Esophagus muscularis mucosa (tissue), 4 donors: ENCODE measurements at regions of chr19 and their contacts with region 1.

Region 1: GRCh38 chr19:39328046-39328705 is 7.5 kb upstream of the LRFN1 start:
- DNase-seq: peak; percentile 95
- H3K4me3 ChIP-seq: no peak overlapping the region
- H3K27ac ChIP-seq: no peak overlapping the region
- H3K4me1 ChIP-seq: peaks cover 0 to 12% (median 6%) of the 10 kb centered on the region in 4 donors
- H3K27me3 ChIP-seq: peaks cover 0 to 11% (median 0%) of the 10 kb centered on the region in 4 donors
- CTCF ChIP-seq: peak in 2 of 3 experiments; percentile 93 to 96
- EP300 ChIP-seq: no peak
- POLR2A ChIP-seq: no peak

Region 2: DNA sequence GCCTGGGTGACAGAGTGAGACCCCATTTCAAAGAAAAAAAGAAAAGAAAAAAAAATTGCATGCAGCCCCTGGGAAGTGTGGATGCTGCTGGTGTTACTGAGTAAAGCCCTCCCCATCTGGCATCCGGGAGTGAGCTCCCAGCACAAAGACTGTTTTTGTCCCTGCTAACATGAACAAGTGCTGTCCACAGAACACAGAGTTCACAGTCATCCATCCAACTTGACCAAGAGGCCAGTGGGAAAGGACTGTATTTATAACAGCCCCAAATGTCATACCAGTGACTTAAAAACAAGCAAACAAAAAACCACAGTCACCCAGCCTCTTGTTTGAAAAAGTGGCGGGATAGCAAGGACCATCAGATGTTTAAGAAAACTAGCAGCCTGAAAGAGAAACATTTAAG is 363.4 kb before region 1 on chr19:
- intact Hi-C with region 1: loop called (anchors 10 kb)
- DNase-seq: no peak
- H3K4me3 ChIP-seq: no peak overlapping the region
- H3K27ac ChIP-seq: no peak overlapping the region
- H3K4me1 ChIP-seq: peaks cover 0 to 11% (median 10%) of the 10 kb centered on the region in 4 donors
- H3K27me3 ChIP-seq: no peaks in the 10 kb centered on the region
- CTCF ChIP-seq: no peak
- EP300 ChIP-seq: no peak
- POLR2A ChIP-seq: no peak

Region 3: DNA sequence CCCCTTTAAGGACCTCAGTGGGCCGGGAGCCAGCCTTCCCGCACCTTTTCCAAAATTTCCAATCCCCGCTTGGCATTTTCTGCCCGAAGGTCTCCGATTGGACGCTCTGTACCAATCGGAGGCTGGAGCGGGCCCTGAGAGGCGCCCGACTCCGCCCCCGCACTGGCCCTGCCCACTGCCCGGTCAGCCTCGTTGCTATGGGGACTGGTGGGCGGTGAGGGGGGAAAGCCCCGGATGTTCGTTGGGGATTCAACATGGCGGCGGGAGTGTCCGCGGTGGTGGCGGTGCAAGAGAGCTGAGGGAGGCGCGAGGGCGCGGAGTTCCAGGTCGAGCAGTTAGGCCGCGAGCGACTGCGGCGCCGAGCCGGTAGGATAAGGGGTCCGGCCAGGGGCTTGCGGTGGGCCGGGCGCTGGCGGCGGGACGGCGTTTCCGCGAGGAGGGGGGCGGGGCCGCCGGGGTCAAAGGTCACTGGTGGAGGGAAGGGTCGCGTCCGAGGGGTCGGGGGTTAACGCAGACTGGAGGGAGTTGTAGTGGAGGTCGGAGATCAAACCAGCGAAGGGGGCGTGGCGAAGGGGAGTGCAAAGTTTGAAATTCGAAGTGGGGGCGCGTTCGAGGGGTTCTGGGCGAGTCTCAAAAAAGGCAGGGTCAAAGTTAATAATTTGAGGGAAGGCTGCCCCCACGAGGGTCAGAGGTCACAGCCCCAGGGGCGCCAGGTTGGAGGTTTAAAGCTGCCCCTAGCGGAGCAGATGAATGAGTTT is 202.4 kb before region 1 on chr19 and contains the start of gene PAK4:
- intact Hi-C with region 1: loop called (anchors 1 kb)
- DNase-seq: peak; percentile 99
- H3K4me3 ChIP-seq: peak within 1 kb of the TSS; percentile 81 to 97 (median 90)
- H3K27ac ChIP-seq: peak within 1 kb of the TSS; percentile 75 to 86 (median 82)
- H3K4me1 ChIP-seq: peaks cover 51 to 72% (median 65%) of the 10 kb centered on the region in 4 donors
- H3K27me3 ChIP-seq: peaks cover 0 to 10% (median 0%) of the 10 kb centered on the region in 4 donors
- CTCF ChIP-seq: peak in 1 of 3 experiments; percentile 18
- EP300 ChIP-seq: no peak
- POLR2A ChIP-seq: no peak
- total RNA-seq, gene PAK4: 8.3 to 18.4 (median 11.0) TPM

Region 4: DNA sequence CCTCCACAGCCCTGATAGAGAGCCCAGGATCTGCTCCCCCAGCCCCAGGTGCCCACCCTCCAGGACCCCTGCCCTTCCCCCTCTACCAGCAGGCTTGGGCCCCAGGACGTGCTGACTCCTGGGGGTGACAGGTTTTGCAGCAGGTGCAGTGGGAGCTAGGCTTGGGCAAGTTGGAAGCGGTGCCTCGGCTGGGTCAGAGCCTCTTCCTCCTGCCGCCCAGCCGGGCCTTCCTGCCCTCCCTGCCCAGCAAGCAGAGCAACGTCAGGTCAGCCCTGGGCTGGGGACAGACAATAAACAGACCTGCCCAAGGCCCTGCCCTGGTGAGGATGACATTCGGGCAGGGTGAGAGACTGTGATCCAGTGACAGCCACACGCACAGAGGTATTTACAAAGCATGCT is 140.6 kb before region 1 on chr19:
- intact Hi-C with region 1: loop called (anchors 10 kb)
- DNase-seq: no peak
- H3K4me3 ChIP-seq: no peak overlapping the region
- H3K27ac ChIP-seq: no peak overlapping the region
- H3K4me1 ChIP-seq: peaks cover 0 to 8% (median 0%) of the 10 kb centered on the region in 4 donors
- H3K27me3 ChIP-seq: peaks cover 0 to 21% (median 0%) of the 10 kb centered on the region in 4 donors
- CTCF ChIP-seq: peak in 2 of 3 experiments; percentile 0 to 23
- EP300 ChIP-seq: no peak
- POLR2A ChIP-seq: no peak

Region 5: DNA sequence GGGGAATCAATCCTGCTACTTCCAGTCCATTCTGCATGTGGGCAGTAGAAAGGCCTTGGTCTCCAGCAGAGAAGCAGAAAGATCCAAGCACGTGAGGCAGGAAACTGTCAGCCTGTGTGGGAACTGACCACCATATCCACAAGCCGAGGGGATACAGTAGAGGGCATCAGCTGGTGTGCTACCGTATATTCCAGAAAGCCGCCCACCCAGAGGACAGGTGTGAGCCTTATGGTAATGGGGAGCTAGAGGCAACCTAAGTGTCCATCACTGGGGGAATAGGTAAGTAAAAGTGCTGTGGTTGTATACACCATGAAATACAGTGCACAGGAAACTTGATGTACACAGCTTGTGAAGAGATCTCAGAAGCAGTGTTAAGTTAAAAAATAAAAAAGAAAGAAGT is 34.8 kb before region 1 on chr19:
- intact Hi-C with region 1: no loop called
- DNase-seq: no peak
- H3K4me3 ChIP-seq: no peak overlapping the region
- H3K27ac ChIP-seq: no peak overlapping the region
- H3K4me1 ChIP-seq: no peaks in the 10 kb centered on the region
- H3K27me3 ChIP-seq: peaks cover 0 to 49% (median 0%) of the 10 kb centered on the region in 4 donors
- CTCF ChIP-seq: no peak
- EP300 ChIP-seq: no peak
- POLR2A ChIP-seq: no peak